B cell (primary cell): ENCODE measurements at regions of chrX and their contacts with region 1.

Region 1: DNA sequence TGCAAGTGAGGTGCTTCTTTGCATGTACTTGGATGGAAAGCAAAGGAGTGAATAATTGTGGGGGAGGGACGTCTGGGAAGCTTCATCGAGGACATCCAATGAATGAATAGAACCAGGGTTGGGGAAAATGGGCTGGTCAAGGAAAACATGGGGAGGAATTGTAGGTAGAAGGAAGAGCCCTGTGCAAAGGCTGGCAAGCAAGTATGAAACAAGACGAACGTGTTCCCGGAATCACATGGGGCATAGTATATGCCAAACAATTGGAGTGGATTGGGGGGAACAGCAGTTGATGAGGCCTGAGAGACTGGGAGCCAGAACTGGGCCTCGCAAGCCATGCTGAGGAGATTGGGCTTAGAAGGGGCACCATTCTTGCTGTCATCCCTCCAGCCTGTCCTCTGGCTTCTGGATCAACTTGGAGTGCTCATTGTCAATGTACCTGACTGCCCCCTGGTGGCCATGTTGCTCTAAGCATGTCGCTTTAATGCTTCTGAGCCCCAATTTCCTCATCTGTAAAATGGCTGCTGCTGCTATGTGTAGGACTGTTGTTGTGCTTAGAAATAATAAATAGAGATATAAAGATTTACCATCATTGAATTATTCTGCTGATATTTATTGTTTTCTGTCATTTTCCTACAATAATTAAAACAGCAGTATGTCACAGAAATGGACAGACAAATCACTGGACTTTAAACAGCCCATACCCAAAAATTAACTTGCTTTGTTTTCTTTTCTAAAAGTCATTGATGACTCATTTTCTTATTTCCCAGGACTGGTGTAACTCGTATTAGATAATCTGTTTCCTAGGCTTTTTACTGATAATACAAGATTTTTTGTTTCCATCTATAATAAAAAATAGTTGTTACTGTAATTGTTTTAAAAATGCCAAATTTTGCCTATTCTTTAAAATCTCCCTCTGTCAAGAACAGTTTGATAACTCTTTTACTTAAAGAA is 66.4 kb downstream of the JADE3 start:
- DNase-seq: peak; percentile 82
- ATAC-seq: peak; percentile 84
- H3K4me3 ChIP-seq: no peak overlapping the region
- H3K4me3 Mint-ChIP-seq: no peak overlapping the region
- H3K27ac ChIP-seq: no peak overlapping the region
- H3K27ac Mint-ChIP-seq: peak overlapping the region; percentile 1
- H3K4me1 ChIP-seq: peaks cover 9 to 15% of the 10 kb centered on the region in 2 donors
- H3K4me1 Mint-ChIP-seq: peaks cover 26% of the 10 kb centered on the region
- H3K27me3 ChIP-seq: no peaks in the 10 kb centered on the region
- H3K27me3 Mint-ChIP-seq: no peaks in the 10 kb centered on the region
- CTCF ChIP-seq: peak; percentile 67

Region 2: DNA sequence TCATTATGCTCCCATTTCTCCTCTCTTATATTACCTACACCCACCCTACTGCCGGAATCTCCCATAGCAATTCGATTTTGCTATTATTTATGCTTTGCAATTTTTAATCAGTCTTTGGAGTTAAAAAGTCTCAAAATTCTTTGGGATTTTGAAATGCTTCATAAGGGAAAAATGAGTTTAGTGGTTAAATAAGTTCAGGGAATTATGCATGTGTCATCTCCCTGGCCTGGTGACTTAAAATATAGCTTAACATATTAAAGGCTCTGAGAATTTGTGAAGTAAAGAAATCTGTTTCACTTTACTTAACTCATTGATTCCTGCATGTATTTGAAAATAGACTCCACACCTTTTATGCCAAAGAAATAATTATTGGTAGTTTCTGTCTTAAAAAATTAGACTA is 1592.9 kb before region 1 on chrX:
- CTCF ChIA-PET with region 1: no interaction called
- POLR2A ChIA-PET with region 1: no interaction called
- intact Hi-C with region 1: no loop called
- DNase-seq: no peak
- ATAC-seq: no peak
- H3K4me3 ChIP-seq: no peak overlapping the region
- H3K4me3 Mint-ChIP-seq: no peak overlapping the region
- H3K27ac ChIP-seq: no peak overlapping the region
- H3K27ac Mint-ChIP-seq: no peak overlapping the region
- H3K4me1 ChIP-seq: no peaks in the 10 kb centered on the region
- H3K4me1 Mint-ChIP-seq: no peaks in the 10 kb centered on the region
- H3K27me3 ChIP-seq: no peaks in the 10 kb centered on the region
- H3K27me3 Mint-ChIP-seq: no peaks in the 10 kb centered on the region
- CTCF ChIP-seq: no peak

Region 3: GRCh38 chrX:47030339-47030738 is 51.7 kb after region 1 on chrX:
- CTCF ChIA-PET with region 1: interaction called, 8 read pairs
- POLR2A ChIA-PET with region 1: no interaction called
- intact Hi-C with region 1: loop called (anchors 5 kb)
- DNase-seq: peak; percentile 69
- ATAC-seq: no peak
- H3K4me3 ChIP-seq: no peak overlapping the region
- H3K4me3 Mint-ChIP-seq: no peak overlapping the region
- H3K27ac ChIP-seq: no peak overlapping the region
- H3K27ac Mint-ChIP-seq: no peak overlapping the region
- H3K4me1 ChIP-seq: no peaks in the 10 kb centered on the region
- H3K4me1 Mint-ChIP-seq: peaks cover 7% of the 10 kb centered on the region
- H3K27me3 ChIP-seq: no peaks in the 10 kb centered on the region
- H3K27me3 Mint-ChIP-seq: no peaks in the 10 kb centered on the region
- CTCF ChIP-seq: peak; percentile 73